ENCODE measurements at regions of chr9 and their contacts with region 1.

Region 1: DNA sequence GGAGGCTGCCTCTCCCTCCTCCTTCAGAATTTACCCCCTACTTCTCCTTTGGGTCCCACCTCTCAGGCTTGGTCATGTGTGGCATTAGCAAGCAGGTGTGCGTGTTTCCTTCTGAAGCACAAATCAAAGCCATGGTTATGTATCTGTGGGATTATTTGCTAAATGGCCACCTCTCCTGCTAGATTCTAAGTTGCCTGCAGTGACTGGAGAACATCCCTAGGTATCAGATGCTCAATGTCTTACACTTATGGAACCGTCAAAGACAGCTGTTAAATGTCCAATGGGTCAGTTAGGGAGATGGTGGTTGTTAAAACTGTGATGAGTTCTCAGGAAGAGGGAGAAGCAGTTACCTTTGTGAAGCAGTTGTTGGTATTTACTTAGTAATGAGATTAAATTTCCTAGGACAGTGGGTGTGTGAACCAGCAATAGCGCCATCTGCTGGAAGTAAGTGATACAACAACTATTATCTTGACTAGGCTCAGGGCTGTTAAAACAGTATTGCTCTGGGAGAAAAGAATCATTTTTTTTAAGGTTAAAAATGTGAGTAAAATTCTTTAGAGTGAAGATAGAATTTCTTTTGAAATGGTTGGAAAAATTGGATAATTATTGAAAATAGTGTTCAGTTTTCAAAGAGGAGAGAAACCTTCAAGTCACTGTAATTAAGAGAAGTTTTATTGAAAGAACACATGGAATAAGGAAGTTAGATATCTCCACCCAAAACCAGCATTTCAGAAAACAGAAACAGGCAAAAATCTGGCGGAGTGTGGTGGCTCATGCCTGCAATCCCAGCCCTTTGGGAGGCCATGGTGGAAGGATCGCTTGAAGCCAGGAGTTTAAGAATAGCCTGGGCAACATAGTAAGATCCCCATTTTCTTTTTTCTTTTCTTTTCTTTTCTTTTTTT is 71.3 kb downstream of the TMC1 start:
- DNase-seq: peak in 5 of 9 experiments; percentile 29 to 71 (median 50)
- ATAC-seq: peak; percentile 71
- H3K4me3 ChIP-seq: no peak overlapping the region
- H3K4me3 Mint-ChIP-seq: no peak overlapping the region
- H3K27ac ChIP-seq: no peak overlapping the region
- H3K27ac Mint-ChIP-seq: no peak overlapping the region
- H3K4me1 ChIP-seq: no peaks in the 10 kb centered on the region
- H3K4me1 Mint-ChIP-seq: peaks cover 3% of the 10 kb centered on the region
- H3K27me3 ChIP-seq: no peaks in the 10 kb centered on the region
- H3K27me3 Mint-ChIP-seq: peaks cover 5% of the 10 kb centered on the region
- CTCF ChIP-seq: peak; percentile 89

Region 2: DNA sequence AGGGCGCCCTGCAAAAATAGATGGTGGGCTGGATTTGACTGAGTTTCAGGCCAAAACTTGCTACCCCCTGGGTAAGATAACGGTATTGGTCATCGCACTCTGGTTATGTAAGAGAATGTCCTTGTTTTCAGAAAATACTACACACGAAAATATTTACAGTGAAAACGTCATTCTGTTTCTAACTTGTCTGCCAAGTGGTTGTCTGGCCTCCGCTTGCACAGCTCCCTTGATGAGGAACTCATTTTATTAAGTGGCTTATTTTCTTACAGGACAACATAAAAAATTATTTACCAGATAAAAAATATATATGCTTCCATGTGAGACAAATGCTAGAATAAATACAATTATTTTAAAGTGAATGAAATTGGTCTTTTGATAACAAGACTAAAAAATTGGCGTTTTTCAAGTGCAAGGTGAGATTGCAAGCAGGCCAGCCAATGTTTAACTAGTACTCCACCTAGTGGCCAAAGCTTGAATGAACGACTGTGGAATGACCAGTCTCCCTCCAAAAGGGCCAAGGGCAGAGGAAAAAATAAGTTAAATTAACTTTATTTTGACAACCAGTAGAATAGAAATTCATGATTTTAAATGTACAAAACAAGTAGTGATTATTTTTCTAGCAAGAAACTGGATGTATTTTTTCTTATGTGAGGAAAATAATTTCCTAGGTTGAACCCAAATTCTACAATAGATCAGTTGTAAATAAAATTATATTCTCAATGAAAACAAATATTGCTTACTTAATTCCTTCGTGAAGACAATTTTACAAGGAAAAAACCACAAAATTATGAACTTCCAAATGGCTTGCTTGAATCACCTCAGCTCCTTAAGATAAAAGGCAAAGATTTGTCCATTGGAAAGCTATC is 320.9 kb before region 1 on chr9:
- CTCF ChIA-PET with region 1: interaction called, 184 read pairs
- POLR2A ChIA-PET with region 1: no interaction called
- intact Hi-C with region 1: no loop called
- DNase-seq: peak in 6 of 9 experiments; percentile 19 to 65 (median 48)
- ATAC-seq: peak; percentile 44
- H3K4me3 ChIP-seq: no peak overlapping the region
- H3K4me3 Mint-ChIP-seq: no peak overlapping the region
- H3K27ac ChIP-seq: no peak overlapping the region
- H3K27ac Mint-ChIP-seq: no peak overlapping the region
- H3K4me1 ChIP-seq: no peaks in the 10 kb centered on the region
- H3K4me1 Mint-ChIP-seq: no peaks in the 10 kb centered on the region
- H3K27me3 ChIP-seq: no peaks in the 10 kb centered on the region
- H3K27me3 Mint-ChIP-seq: peaks cover 2% of the 10 kb centered on the region
- CTCF ChIP-seq: peak; percentile 88

Region 3: DNA sequence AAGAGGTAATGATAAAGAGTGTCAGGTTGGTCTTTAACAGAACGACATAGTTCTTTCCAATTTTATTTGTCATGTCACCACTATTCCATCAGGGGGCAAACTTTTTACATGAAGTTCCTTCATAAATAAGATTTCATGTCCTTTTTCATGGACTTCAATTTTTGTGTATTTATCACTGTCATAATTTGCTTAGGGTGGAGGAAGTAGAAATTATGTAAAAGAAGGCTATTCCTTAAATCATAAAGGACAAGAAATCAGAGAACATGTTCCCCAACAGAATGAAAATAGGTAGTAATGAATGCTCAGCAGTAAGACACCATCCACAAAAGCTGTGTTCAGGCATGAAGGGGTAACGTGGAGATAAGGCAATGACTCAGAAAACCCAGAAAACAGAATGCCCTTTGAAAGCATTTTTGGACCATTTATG is 300.5 kb before region 1 on chr9:
- CTCF ChIA-PET with region 1: interaction called, 33 read pairs
- POLR2A ChIA-PET with region 1: interaction called, 3 read pairs
- intact Hi-C with region 1: loop called (anchors 1 kb)
- DNase-seq: peak in 2 of 9 experiments; percentile 37 to 49
- ATAC-seq: no peak
- H3K4me3 ChIP-seq: no peak overlapping the region
- H3K4me3 Mint-ChIP-seq: no peak overlapping the region
- H3K27ac ChIP-seq: no peak overlapping the region
- H3K27ac Mint-ChIP-seq: no peak overlapping the region
- H3K4me1 ChIP-seq: no peaks in the 10 kb centered on the region
- H3K4me1 Mint-ChIP-seq: no peaks in the 10 kb centered on the region
- H3K27me3 ChIP-seq: no peaks in the 10 kb centered on the region
- H3K27me3 Mint-ChIP-seq: peaks cover 11% of the 10 kb centered on the region
- CTCF ChIP-seq: peak; percentile 68

Region 4: DNA sequence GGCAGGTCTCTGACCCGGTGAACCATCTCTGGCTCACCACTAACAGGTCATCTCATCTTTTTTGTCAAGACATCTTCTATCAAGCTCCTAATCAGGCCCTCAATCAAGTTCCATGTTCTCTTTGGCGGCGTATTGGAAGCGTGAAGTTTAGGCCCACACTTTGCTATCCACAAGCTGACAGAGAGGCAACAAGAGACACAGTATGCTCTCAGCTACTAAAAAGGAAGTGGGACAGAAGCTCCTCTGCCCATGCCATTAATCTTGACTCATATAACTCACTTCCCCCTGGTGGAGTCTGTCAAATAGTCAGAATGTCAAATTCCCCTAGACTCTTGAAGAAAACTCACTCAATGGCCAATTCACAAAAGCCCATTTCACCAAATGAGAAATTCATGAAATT is 148.9 kb before region 1 on chr9:
- CTCF ChIA-PET with region 1: interaction called, 4 read pairs
- POLR2A ChIA-PET with region 1: no interaction called
- intact Hi-C with region 1: loop called in 1 of 2 experiments (anchors 2 kb)
- DNase-seq: peak in 3 of 9 experiments; percentile 5 to 51 (median 31)
- ATAC-seq: peak; percentile 64
- H3K4me3 ChIP-seq: no peak overlapping the region
- H3K4me3 Mint-ChIP-seq: no peak overlapping the region
- H3K27ac ChIP-seq: peak overlapping the region in 1 of 2 experiments; percentile 24
- H3K27ac Mint-ChIP-seq: peak overlapping the region; percentile 3
- H3K4me1 ChIP-seq: no peaks in the 10 kb centered on the region
- H3K4me1 Mint-ChIP-seq: peaks cover 12% of the 10 kb centered on the region
- H3K27me3 ChIP-seq: no peaks in the 10 kb centered on the region
- H3K27me3 Mint-ChIP-seq: peaks cover 2% of the 10 kb centered on the region
- CTCF ChIP-seq: no peak

Region 5: DNA sequence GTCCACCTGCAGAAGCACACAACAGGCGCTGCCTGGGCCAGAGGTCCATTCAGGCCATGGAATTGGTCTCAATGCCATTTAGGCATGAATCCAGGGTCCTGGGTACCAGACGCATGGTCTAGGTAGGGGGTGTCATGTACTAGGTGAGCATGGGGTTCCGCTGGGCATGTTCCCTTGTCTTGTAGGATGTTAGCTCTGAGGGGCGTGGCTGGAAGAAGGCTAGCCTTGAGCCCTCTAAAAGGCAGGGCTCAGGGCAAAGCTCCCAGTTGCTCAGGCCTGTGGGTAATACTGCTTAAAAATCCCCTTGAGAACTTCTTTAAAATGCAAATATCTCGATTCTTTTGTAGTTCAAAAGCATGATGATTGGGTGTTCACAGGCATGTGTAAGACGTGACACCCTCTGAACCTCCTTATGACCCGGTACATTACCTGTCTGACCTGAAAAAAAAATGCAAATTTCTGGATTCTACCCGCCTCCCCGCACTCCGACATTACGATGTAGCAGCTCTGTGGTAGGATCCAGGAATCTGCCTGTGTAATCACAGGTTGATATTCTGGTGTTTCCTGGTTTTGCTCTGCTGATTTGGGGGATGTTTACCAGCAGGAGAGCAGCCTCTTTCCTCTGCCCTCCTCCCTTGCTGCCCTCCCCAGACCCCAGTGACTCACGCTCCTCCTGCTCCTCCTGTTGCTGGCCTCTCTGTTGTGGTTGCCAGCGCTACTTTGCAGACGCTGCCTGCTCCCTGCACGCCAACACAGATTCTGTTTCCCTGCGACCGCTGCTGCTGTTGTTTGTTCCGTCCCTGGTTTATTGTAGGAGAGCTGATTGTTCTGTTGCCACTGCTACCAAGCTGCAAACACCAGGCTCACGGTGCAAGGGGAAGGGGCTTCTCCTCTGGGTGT is 65.6 kb before region 1 on chr9:
- CTCF ChIA-PET with region 1: interaction called, 5 read pairs
- POLR2A ChIA-PET with region 1: no interaction called
- intact Hi-C with region 1: loop called in 1 of 2 experiments (anchors 2 kb)
- DNase-seq: peak; percentile 45 to 88 (median 82)
- ATAC-seq: peak; percentile 86
- H3K4me3 ChIP-seq: peak overlapping the region; percentile 32 to 43
- H3K4me3 Mint-ChIP-seq: peak overlapping the region; percentile 86
- H3K27ac ChIP-seq: peak overlapping the region; percentile 43 to 66
- H3K27ac Mint-ChIP-seq: peak overlapping the region; percentile 94
- H3K4me1 ChIP-seq: peaks cover 18% of the 10 kb centered on the region
- H3K4me1 Mint-ChIP-seq: peaks cover 30% of the 10 kb centered on the region
- H3K27me3 ChIP-seq: no peaks in the 10 kb centered on the region
- H3K27me3 Mint-ChIP-seq: no peaks in the 10 kb centered on the region
- CTCF ChIP-seq: no peak

Region 6: GRCh38 chr9:72977670-72978069 is 384.9 kb after region 1 on chr9:
- CTCF ChIA-PET with region 1: no interaction called
- POLR2A ChIA-PET with region 1: no interaction called
- intact Hi-C with region 1: no loop called
- DNase-seq: no peak
- ATAC-seq: no peak
- H3K4me3 ChIP-seq: no peak overlapping the region
- H3K4me3 Mint-ChIP-seq: no peak overlapping the region
- H3K27ac ChIP-seq: no peak overlapping the region
- H3K27ac Mint-ChIP-seq: no peak overlapping the region
- H3K4me1 ChIP-seq: no peaks in the 10 kb centered on the region
- H3K4me1 Mint-ChIP-seq: no peaks in the 10 kb centered on the region
- H3K27me3 ChIP-seq: no peaks in the 10 kb centered on the region
- H3K27me3 Mint-ChIP-seq: peaks cover 8% of the 10 kb centered on the region
- CTCF ChIP-seq: no peak

Region 7: DNA sequence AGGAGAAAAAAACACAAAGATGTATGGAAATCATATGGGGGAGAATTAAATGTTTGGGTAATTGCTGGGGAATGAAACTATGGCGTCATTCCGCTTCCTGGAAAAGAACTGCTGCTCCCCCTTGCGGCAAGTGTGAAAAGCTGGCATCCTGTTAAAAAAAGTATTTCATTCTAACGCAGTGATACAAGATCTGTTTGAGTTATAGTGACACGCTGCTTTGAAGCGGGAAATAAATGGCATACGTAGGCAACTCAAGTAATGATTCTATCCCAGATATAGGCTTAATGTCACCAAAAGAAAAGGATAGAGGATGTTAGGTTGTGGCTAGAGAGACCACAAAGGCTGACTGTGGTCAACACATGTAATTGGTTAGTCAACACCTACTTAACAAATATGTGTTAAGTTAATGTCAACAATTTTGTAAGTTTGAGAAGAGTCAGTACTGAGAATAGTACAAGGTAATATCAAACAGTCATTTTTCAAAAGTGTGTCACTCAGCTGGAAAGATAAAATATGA is 430.3 kb after region 1 on chr9:
- CTCF ChIA-PET with region 1: no interaction called
- POLR2A ChIA-PET with region 1: no interaction called
- intact Hi-C with region 1: loop called in 1 of 2 experiments (anchors 10 kb)
- DNase-seq: peak in 7 of 9 experiments; percentile 17 to 71 (median 52)
- ATAC-seq: peak; percentile 46
- H3K4me3 ChIP-seq: no peak overlapping the region
- H3K4me3 Mint-ChIP-seq: no peak overlapping the region
- H3K27ac ChIP-seq: no peak overlapping the region
- H3K27ac Mint-ChIP-seq: no peak overlapping the region
- H3K4me1 ChIP-seq: peaks cover 3% of the 10 kb centered on the region
- H3K4me1 Mint-ChIP-seq: peaks cover 6% of the 10 kb centered on the region
- H3K27me3 ChIP-seq: no peaks in the 10 kb centered on the region
- H3K27me3 Mint-ChIP-seq: peaks cover 19% of the 10 kb centered on the region
- CTCF ChIP-seq: peak; percentile 53

Region 8: GRCh38 chr9:73183917-73184861 is 591.4 kb after region 1 on chr9:
- CTCF ChIA-PET with region 1: no interaction called
- POLR2A ChIA-PET with region 1: no interaction called
- intact Hi-C with region 1: loop called (anchors 10 kb)
- DNase-seq: peak in 2 of 9 experiments; percentile 63 to 75
- ATAC-seq: no peak
- H3K4me3 ChIP-seq: no peak overlapping the region
- H3K4me3 Mint-ChIP-seq: no peak overlapping the region
- H3K27ac ChIP-seq: no peak overlapping the region
- H3K27ac Mint-ChIP-seq: no peak overlapping the region
- H3K4me1 ChIP-seq: no peaks in the 10 kb centered on the region
- H3K4me1 Mint-ChIP-seq: no peaks in the 10 kb centered on the region
- H3K27me3 ChIP-seq: peaks cover 0 to 2% of the 10 kb centered on the region in 2 experiments
- H3K27me3 Mint-ChIP-seq: peaks cover 3% of the 10 kb centered on the region
- CTCF ChIP-seq: peak; percentile 91

Measured in CD8-positive, alpha-beta T cell (primary cell).